Ovary (tissue), 10 donors: ENCODE measurements at regions of chr17 and their contacts with region 1.

Region 1: GRCh38 chr17:64534175-64534574 is 27.4 kb downstream of the CEP95 start:
- DNase-seq: no peak
- H3K4me3 ChIP-seq: no peak overlapping the region
- H3K27ac ChIP-seq: no peak overlapping the region
- H3K4me1 ChIP-seq: no peaks in the 10 kb centered on the region
- H3K27me3 ChIP-seq: no peaks in the 10 kb centered on the region
- CTCF ChIP-seq: no peak
- EP300 ChIP-seq: no peak
- POLR2A ChIP-seq: no peak

Region 2: GRCh38 chr17:64506576-64507477 is 27.3 kb before region 1 on chr17 and contains the start of gene CEP95:
- intact Hi-C with region 1: loop called in 1 of 4 experiments (anchors 2 kb)
- DNase-seq: peak; percentile 97 to 98 (median 98)
- H3K4me3 ChIP-seq: peak within 1 kb of the TSS; percentile 99
- H3K27ac ChIP-seq: peak within 1 kb of the TSS; percentile 97 to 99
- H3K4me1 ChIP-seq: peaks cover 4% of the 10 kb centered on the region
- H3K27me3 ChIP-seq: no peaks in the 10 kb centered on the region
- CTCF ChIP-seq: peak in 2 of 3 donors; percentile 5 to 19
- EP300 ChIP-seq: no peak
- POLR2A ChIP-seq: peak; percentile 88
- total RNA-seq, gene CEP95: 50.8 to 87.2 (median 65.6) TPM

Region 3: GRCh38 chr17:64599187-64599676 is 65.1 kb after region 1 on chr17:
- intact Hi-C with region 1: loop called in 1 of 4 experiments (anchors 10 kb)
- DNase-seq: no peak
- H3K4me3 ChIP-seq: no peak overlapping the region
- H3K27ac ChIP-seq: no peak overlapping the region
- H3K4me1 ChIP-seq: no peaks in the 10 kb centered on the region
- H3K27me3 ChIP-seq: no peaks in the 10 kb centered on the region
- CTCF ChIP-seq: no peak
- EP300 ChIP-seq: no peak
- POLR2A ChIP-seq: no peak

Region 4: GRCh38 chr17:64635647-64636307 is 101.6 kb after region 1 on chr17:
- intact Hi-C with region 1: no loop called
- DNase-seq: no peak
- H3K4me3 ChIP-seq: no peak overlapping the region
- H3K27ac ChIP-seq: no peak overlapping the region
- H3K4me1 ChIP-seq: peaks cover 6% of the 10 kb centered on the region
- H3K27me3 ChIP-seq: no peaks in the 10 kb centered on the region
- CTCF ChIP-seq: no peak
- EP300 ChIP-seq: no peak
- POLR2A ChIP-seq: no peak